Heart right ventricle (tissue), 16 donors: ENCODE measurements at regions of chr6 and their contacts with region 1.

Region 1: DNA sequence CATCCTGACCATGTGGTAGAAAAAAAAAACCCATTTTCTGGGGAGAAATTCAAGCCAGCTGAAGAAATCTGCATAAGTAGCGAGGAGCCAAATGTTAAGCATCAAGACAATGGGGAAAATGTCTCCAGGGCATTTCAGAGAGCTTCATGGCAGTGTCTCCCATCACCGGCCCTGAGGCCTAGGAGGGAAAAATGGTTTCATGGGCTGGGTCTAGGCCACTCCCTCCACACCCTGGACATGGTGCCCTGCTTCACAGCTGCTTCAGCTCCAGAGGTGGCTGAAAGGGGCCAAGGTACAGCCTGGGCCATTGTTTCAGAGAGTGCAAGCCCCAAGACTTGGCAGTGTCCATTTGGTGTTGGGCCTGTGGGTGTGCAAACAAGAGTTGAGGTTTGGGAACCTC is 34.4 kb upstream of the B3GAT2 start:
- DNase-seq: no peak
- ATAC-seq: no peak
- H3K4me3 ChIP-seq: no peak overlapping the region
- H3K27ac ChIP-seq: no peak overlapping the region
- H3K4me1 ChIP-seq: no peaks in the 10 kb centered on the region
- H3K27me3 ChIP-seq: no peaks in the 10 kb centered on the region
- CTCF ChIP-seq: no peak

Region 2: DNA sequence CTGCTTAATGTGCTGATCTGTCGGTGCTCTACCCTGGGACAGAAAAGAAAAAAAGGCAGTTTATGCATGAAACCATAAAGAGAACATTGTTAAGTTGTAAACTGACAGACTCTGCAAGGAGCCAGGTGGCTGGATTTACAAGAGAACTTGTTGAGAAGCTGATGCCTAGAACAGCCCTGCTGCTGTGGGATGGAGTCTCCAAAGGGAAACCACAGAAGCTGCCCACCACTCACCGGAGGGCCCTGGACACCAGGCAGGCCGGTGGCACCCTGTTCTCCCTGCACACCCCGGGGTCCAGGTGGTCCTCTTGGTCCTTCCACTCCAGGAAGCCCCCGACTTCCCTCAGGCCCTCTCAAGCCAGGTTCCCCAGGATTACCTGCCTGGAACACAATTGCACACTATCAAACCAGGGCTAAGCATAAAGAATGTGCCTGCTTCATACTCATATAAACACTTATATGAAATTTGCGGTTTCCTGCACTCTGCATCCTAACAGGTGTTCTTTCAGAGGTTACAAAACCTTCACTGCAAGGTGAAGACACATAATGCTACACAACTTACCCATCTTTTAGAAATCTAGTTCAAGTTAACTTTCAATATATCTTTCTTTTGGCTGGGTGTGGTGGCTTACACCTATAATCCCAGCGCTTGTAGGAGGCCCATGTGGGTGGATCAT is 756.6 kb before region 1 on chr6:
- intact Hi-C with region 1: loop called in 1 of 10 experiments (anchors 5 kb)
- DNase-seq: no peak
- ATAC-seq: no peak
- H3K4me3 ChIP-seq: no peak overlapping the region
- H3K27ac ChIP-seq: no peak overlapping the region
- H3K4me1 ChIP-seq: no peaks in the 10 kb centered on the region
- H3K27me3 ChIP-seq: no peaks in the 10 kb centered on the region
- CTCF ChIP-seq: no peak